Activated CD4-positive, alpha-beta T cell treated with anti-CD3 and anti-CD28 coated beads for 36 hours (primary cell): ENCODE measurements at regions of chr1 and their contacts with region 1.

Region 1: GRCh38 chr1:111647736-111648135 is 28.1 kb downstream of the RAP1A start:
- DNase-seq: no peak
- ATAC-seq: peak; percentile 84
- H3K4me3 Mint-ChIP-seq: no peak overlapping the region
- H3K27ac Mint-ChIP-seq: peak overlapping the region; percentile 82
- H3K4me1 Mint-ChIP-seq: peaks cover 74% of the 10 kb centered on the region
- H3K27me3 Mint-ChIP-seq: no peaks in the 10 kb centered on the region

Region 2: GRCh38 chr1:111633736-111634247 is 13.9 kb before region 1 on chr1:
- CTCF ChIA-PET with region 1: interaction called, 8 read pairs
- POLR2A ChIA-PET with region 1: no interaction called
- intact Hi-C with region 1: loop called in 1 of 2 experiments (anchors 2 kb)
- DNase-seq: no peak
- ATAC-seq: no peak
- H3K4me3 Mint-ChIP-seq: no peak overlapping the region
- H3K27ac Mint-ChIP-seq: no peak overlapping the region
- H3K4me1 Mint-ChIP-seq: peaks cover 84% of the 10 kb centered on the region
- H3K27me3 Mint-ChIP-seq: no peaks in the 10 kb centered on the region